ENCODE measurements at regions of chr3 and their contacts with region 1.

Region 1: GRCh38 chr3:8663177-8664061 is 18.8 kb upstream of the SSUH2 start:
- DNase-seq: no peak
- ATAC-seq: no peak

Region 2: DNA sequence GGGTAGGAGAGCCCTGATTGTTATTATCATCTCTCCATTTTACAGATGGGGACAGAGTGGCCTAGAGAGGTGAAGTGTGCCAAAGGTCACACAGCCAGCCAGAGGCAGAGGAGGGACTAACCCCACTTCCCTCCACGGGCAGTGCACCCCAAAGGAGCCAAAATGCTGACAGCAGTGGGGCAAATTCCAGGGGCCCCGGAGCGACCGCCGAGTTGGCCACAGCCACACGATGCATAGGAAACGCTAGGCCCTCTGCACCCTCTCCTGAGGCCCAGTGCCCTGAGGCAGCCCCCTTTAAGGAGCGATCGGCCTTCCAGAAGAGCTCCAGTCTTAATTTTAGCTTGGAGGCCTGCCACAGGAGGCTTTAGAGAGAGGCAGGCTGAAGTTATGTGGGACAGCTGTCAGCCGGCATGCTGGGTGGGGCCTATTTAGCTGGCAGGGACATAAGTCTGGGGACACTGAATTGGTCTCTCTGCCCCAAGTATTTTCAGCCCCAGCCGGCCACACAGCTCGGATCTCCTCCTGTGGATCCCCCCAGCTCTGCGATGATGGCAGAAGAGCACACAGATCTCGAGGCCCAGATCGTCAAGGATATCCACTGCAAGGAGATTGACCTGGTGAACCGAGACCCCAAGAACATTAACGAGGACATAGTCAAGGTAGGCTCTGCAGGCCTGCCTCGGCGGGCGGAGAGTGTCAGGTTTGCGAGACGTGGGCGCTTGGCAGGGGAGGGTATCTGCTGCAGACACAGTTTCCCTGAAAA is 70.1 kb after region 1 on chr3 and contains the start of gene CAV3:
- intact Hi-C with region 1: loop called (anchors 5 kb)
- DNase-seq: no peak
- ATAC-seq: peak; percentile 86
- total RNA-seq, gene CAV3: 34.0 TPM

Region 3: GRCh38 chr3:8769088-8769822 is 105.8 kb after region 1 on chr3 and contains the start of gene OXTR:
- intact Hi-C with region 1: loop called (anchors 2 kb)
- DNase-seq: peak; percentile 74
- ATAC-seq: peak; percentile 92
- total RNA-seq, gene OXTR: 0.32 TPM